ENCODE measurements at regions of chr14 and their contacts with region 1.

Region 1: DNA sequence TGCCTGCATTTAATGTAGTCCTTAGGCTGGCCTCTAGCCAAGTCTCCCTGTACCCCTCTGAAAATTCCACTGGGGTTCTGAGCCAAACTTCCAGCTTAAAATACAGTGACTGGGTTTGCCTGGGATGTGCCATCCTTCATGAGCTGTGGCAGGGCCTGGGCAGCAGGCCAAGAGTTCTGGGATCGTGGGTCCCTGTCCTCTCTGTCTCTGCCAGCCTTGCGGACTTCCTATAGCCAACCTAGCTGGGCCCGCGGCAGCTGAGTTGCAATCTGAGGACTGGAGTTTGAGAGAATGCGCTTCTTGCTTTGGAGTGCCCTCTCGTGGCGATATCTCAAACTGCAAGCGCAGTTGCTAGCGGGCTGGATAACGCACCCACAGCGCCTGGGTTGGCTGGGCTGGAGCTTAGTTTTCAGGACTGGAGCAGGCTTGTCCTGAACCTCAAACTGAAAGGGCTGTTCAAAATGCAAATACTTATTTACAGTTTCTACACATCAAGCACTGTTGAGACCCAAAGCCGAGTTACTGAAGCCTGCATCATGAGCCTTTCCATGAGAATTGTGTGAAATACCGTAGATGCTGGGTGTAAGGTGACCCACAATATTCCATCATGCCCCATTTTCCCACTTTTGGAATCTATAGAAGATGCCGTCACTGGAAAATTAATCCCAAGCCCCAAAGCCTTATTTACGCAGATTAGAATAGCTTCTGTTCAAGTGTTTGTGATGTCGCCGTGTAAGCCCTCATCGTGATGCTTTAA is 7.3 kb upstream of the IFI27L2 start:
- DNase-seq: peak; percentile 59 to 88 (median 79)
- ATAC-seq: peak; percentile 89 to 92 (median 90)
- H3K4me3 ChIP-seq: no peak overlapping the region
- H3K4me3 Mint-ChIP-seq: no peak overlapping the region
- H3K27ac ChIP-seq: no peak overlapping the region
- H3K27ac Mint-ChIP-seq: no peak overlapping the region
- H3K4me1 ChIP-seq: peaks cover 0 to 6% of the 10 kb centered on the region in 2 experiments
- H3K4me1 Mint-ChIP-seq: peaks cover 0 to 5% (median 3%) of the 10 kb centered on the region in 3 donors
- H3K27me3 ChIP-seq: peaks cover 0 to 19% of the 10 kb centered on the region in 2 experiments
- H3K27me3 Mint-ChIP-seq: peaks cover 13 to 15% of the 10 kb centered on the region in 2 donors

Region 2: DNA sequence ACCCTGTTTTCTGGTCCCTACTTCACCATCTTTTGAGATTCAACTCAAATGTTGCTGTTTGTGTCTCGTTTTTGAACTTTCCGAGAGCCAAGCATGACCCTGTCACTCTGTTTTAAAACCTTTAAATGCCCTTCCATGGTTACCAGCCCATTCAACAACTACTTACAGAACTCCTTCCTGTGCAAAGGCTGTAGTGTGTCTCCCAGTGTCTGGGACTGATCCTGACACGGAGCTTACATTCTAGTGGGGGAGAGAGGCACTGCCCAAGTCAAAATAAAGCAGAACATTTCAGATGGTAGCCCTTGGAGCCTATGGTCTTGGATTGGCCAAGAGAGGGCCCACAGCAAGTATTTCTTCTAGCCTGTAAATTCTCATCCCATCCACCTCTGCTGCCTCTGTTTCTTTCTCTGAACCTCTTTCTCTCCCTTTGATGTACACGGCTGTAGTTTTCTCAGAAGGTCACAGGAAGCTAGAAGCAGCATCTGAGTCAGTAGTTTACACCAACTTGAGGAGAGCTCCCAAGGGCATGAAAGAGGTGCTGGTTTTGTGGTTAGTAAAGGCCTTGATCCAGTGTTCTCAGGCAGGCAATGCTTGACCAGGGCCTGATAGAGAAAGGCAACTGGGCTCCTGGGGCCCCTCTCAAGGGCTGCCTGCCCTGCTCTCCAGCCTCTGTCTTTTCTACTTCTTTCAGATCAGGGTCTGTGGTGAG is 1856.0 kb before region 1 on chr14:
- CTCF ChIA-PET with region 1: no interaction called
- POLR2A ChIA-PET with region 1: no interaction called
- DNase-seq: peak in 2 of 35 experiments; percentile 3 to 27
- ATAC-seq: peak; percentile 68 to 90 (median 78)
- H3K4me3 ChIP-seq: no peak overlapping the region
- H3K4me3 Mint-ChIP-seq: peak overlapping the region in 1 of 3 donors; percentile 37
- H3K27ac ChIP-seq: peak overlapping the region; percentile 2
- H3K27ac Mint-ChIP-seq: peak overlapping the region; percentile 59 to 75
- H3K4me1 ChIP-seq: peaks cover 11 to 13% of the 10 kb centered on the region in 2 experiments
- H3K4me1 Mint-ChIP-seq: peaks cover 20 to 27% (median 21%) of the 10 kb centered on the region in 3 donors
- H3K27me3 ChIP-seq: peaks cover 0 to 19% of the 10 kb centered on the region in 2 experiments
- H3K27me3 Mint-ChIP-seq: peaks cover 0 to 3% of the 10 kb centered on the region in 2 donors

Region 3: DNA sequence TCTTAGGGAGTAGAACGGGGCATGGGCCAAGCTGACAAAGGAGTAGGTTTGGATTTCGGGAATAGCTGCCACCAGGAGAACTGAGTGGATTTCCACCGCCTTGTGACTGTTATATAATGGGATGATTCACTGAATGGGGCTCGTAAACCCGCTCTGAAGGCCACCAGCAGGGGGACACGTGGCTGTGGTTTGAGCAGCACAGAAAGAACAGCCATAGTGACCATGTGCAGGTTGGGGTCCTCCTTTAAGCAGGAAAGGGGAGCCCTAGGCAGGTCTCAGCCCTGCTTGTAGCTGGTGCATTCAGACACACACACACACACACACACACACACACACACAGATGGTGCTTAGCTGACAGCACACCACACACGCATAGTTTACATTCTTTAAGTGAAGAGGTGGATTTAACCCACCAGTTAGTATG is 151.8 kb before region 1 on chr14:
- CTCF ChIA-PET with region 1: no interaction called
- POLR2A ChIA-PET with region 1: no interaction called
- DNase-seq: no peak
- ATAC-seq: no peak
- H3K4me3 ChIP-seq: no peak overlapping the region
- H3K4me3 Mint-ChIP-seq: no peak overlapping the region
- H3K27ac ChIP-seq: no peak overlapping the region
- H3K27ac Mint-ChIP-seq: no peak overlapping the region
- H3K4me1 ChIP-seq: peaks cover 0 to 13% of the 10 kb centered on the region in 2 experiments
- H3K4me1 Mint-ChIP-seq: peaks cover 5 to 14% (median 9%) of the 10 kb centered on the region in 3 donors
- H3K27me3 ChIP-seq: peaks cover 0 to 28% of the 10 kb centered on the region in 2 experiments
- H3K27me3 Mint-ChIP-seq: peaks cover 0 to 1% of the 10 kb centered on the region in 2 donors

Region 4: GRCh38 chr14:94180655-94181271 is 44.0 kb after region 1 on chr14:
- CTCF ChIA-PET with region 1: interaction called, 20 to 53 read pairs
- POLR2A ChIA-PET with region 1: interaction called in 1 of 2 experiments, 4 read pairs
- DNase-seq: peak in 3 of 35 experiments; percentile 5 to 71 (median 29)
- ATAC-seq: peak; percentile 67 to 83 (median 76)
- H3K4me3 ChIP-seq: peak overlapping the region in 1 of 2 donors; percentile 40
- H3K4me3 Mint-ChIP-seq: peak overlapping the region; percentile 46 to 57 (median 55)
- H3K27ac ChIP-seq: peak overlapping the region; percentile 65
- H3K27ac Mint-ChIP-seq: peak overlapping the region; percentile 75 to 79
- H3K4me1 ChIP-seq: peaks cover 0 to 3% of the 10 kb centered on the region in 2 experiments
- H3K4me1 Mint-ChIP-seq: peaks cover 16 to 19% (median 17%) of the 10 kb centered on the region in 3 donors
- H3K27me3 ChIP-seq: peaks cover 3 to 15% of the 10 kb centered on the region in 2 experiments
- H3K27me3 Mint-ChIP-seq: peaks cover 0 to 6% of the 10 kb centered on the region in 2 donors

Measured in T-cell (primary cell).